ENCODE measurements at regions of chr4 and their contacts with region 1.

Region 1: GRCh38 chr4:68569466-68570121 is 6.5 kb downstream of the UGT2B17 start:
- DNase-seq: no peak
- H3K4me3 ChIP-seq: no peak overlapping the region
- H3K27ac ChIP-seq: no peak overlapping the region
- H3K4me1 ChIP-seq: no peaks in the 10 kb centered on the region
- H3K27me3 ChIP-seq: no peaks in the 10 kb centered on the region
- CTCF ChIP-seq: no peak

Region 2: DNA sequence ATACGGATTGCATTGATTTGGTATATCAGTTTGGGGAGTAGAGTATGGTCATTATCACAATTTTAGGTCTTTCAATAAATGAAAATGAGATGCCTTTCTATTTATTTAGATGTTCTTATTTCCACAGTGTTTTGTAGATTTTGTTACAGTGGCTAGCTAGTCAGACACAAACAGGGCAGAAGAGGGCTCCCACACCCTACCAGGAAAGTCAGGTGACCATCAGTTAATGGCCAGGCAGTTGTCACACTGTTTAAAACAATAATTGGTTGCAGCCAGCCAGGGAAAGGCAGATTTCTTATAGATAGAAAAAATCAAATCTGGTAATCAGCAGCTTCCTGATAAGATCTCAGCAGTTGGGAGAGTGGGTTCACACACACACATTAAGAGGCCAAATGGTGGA is 50.7 kb before region 1 on chr4:
- CTCF ChIA-PET with region 1: no interaction called
- dilution Hi-C with region 1: no loop called
- in situ Hi-C with region 1: no loop called
- intact Hi-C with region 1: loop called (anchors 5 kb)
- DNase-seq: no peak
- H3K4me3 ChIP-seq: no peak overlapping the region
- H3K27ac ChIP-seq: no peak overlapping the region
- H3K4me1 ChIP-seq: no peaks in the 10 kb centered on the region
- H3K27me3 ChIP-seq: no peaks in the 10 kb centered on the region
- CTCF ChIP-seq: no peak